ENCODE measurements at regions of chr20 and their contacts with region 1.

Region 1: DNA sequence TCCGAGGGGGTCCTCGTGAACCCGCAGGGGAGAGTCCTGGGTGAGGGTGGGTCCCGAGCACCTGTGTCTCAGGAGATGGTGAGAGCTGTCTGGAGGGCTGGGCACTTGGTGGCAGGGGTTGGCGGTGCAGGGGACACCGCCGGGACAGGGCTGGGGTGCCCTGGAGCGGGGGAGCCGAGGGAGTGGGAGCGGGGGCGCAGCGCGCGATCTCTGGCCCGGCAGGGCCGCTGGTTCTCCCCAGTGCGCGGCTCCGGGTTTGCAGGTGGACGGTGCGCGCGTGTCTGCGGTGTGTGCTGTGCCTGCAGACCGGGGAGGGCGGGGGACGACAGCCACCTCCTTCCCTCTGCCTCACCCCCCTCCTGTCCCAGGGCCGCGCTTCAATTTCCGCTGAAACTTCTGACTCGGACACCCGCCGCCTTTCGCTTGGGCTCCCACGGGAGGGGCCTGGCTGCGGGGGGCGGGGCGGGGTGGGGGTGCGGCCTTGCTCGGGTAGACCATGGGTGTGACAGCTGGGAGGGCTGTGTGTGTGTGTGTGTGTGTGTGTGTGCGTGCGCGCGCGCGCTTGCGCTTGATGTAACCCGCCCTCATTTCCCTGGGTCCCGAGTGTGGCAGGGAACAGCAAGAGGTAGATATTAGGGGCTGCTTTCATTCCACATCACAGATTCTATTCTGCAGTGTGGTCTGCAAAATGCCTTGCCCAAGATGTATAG is 1.2 kb downstream of the TRIB3 start:
- DNase-seq: peak; percentile 71 to 88 (median 77)
- ATAC-seq: peak; percentile 75
- H3K4me3 ChIP-seq: peak overlapping the region; percentile 93
- H3K27ac ChIP-seq: peak overlapping the region; percentile 96
- H3K4me1 ChIP-seq: peaks cover 25 to 26% of the 10 kb centered on the region in 2 experiments; a peak in 4 of 5 replicates
- H3K27me3 ChIP-seq: no peaks in the 10 kb centered on the region
- CTCF ChIP-seq: no peak
- EP300 ChIP-seq: peak; percentile 27; the same call in 1 of the 2 replicates
- POLR2A ChIP-seq: peak; percentile 82
- RAD21 ChIP-seq: no peak

Region 2: GRCh38 chr20:362271-363254 is 19.2 kb before region 1 on chr20:
- CTCF ChIA-PET with region 1: no interaction called
- POLR2A ChIA-PET with region 1: interaction called, 12 read pairs
- in situ Hi-C with region 1: no loop called
- intact Hi-C with region 1: no loop called
- DNase-seq: peak in 3 of 4 experiments; percentile 30 to 69 (median 51)
- ATAC-seq: peak; percentile 61
- H3K4me3 ChIP-seq: no peak overlapping the region
- H3K27ac ChIP-seq: peak overlapping the region; percentile 70
- H3K4me1 ChIP-seq: peaks cover 31 to 35% of the 10 kb centered on the region in 2 experiments; a peak in 4 of 5 replicates
- H3K27me3 ChIP-seq: no peaks in the 10 kb centered on the region
- CTCF ChIP-seq: peak; percentile 32 to 43 (median 41); a peak in 4 of 6 replicates
- EP300 ChIP-seq: peak; percentile 64
- POLR2A ChIP-seq: no peak
- RAD21 ChIP-seq: peak; percentile 55 to 64

Region 3: GRCh38 chr20:527571-527886 is 145.8 kb after region 1 on chr20:
- CTCF ChIA-PET with region 1: no interaction called
- POLR2A ChIA-PET with region 1: no interaction called
- in situ Hi-C with region 1: no loop called
- intact Hi-C with region 1: no loop called
- DNase-seq: no peak
- ATAC-seq: no peak
- H3K4me3 ChIP-seq: no peak overlapping the region
- H3K27ac ChIP-seq: no peak overlapping the region
- H3K4me1 ChIP-seq: peaks cover 5 to 10% of the 10 kb centered on the region in 2 experiments; a peak in 4 of 5 replicates
- H3K27me3 ChIP-seq: no peaks in the 10 kb centered on the region
- CTCF ChIP-seq: no peak
- EP300 ChIP-seq: no peak
- POLR2A ChIP-seq: no peak
- RAD21 ChIP-seq: no peak

Measured in K562 (cell line).